Naive thymus-derived CD4-positive, alpha-beta T cell (primary cell): ENCODE measurements at regions of chr3 and their contacts with region 1.

Region 1: GRCh38 chr3:45387636-45388348 is 584 bp upstream of the LARS2 start:
- DNase-seq: no peak
- ATAC-seq: no peak
- H3K4me3 ChIP-seq: peak overlapping the region; percentile 95
- H3K4me3 Mint-ChIP-seq: peak overlapping the region; percentile 94 to 99 (median 97)
- H3K27ac ChIP-seq: peak overlapping the region; percentile 77
- H3K27ac Mint-ChIP-seq: peak overlapping the region; percentile 38 to 97 (median 91)
- H3K4me1 ChIP-seq: peaks cover 4 to 8% of the 10 kb centered on the region in 2 donors
- H3K4me1 Mint-ChIP-seq: peaks cover 6 to 27% (median 18%) of the 10 kb centered on the region in 7 donors
- H3K27me3 ChIP-seq: no peaks in the 10 kb centered on the region
- H3K27me3 Mint-ChIP-seq: peaks cover 0 to 35% (median 4%) of the 10 kb centered on the region in 5 donors

Region 2: GRCh38 chr3:45140141-45140784 is 247.5 kb before region 1 on chr3:
- CTCF ChIA-PET with region 1: no interaction called
- POLR2A ChIA-PET with region 1: no interaction called
- intact Hi-C with region 1: no loop called
- DNase-seq: no peak
- ATAC-seq: no peak
- H3K4me3 ChIP-seq: no peak overlapping the region
- H3K4me3 Mint-ChIP-seq: no peak overlapping the region
- H3K27ac ChIP-seq: no peak overlapping the region
- H3K27ac Mint-ChIP-seq: no peak overlapping the region
- H3K4me1 ChIP-seq: peaks cover 2 to 7% of the 10 kb centered on the region in 2 donors
- H3K4me1 Mint-ChIP-seq: peaks cover 4 to 19% (median 14%) of the 10 kb centered on the region in 7 donors
- H3K27me3 ChIP-seq: peaks cover 0 to 2% of the 10 kb centered on the region in 2 donors
- H3K27me3 Mint-ChIP-seq: peaks cover 25 to 61% (median 33%) of the 10 kb centered on the region in 5 donors

Region 3: DNA sequence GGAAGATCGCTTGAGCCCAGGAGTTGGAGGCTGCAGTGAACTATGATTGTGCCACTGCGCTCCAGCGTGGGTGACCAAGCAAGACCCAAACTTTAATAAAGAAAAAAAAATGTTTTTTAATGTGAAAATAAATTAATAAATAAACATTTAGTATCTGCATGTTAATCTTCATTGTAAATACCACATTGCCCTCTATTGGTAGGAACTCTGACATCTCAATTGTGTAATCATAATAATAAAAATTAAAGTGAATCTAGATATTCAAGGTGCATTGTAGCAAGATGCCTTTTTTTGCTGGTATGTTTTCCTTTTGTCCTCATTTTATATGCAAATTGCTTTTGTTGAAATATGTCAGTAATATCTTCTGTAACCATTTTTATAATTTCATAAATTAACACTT is 111.7 kb after region 1 on chr3:
- CTCF ChIA-PET with region 1: no interaction called
- POLR2A ChIA-PET with region 1: no interaction called
- intact Hi-C with region 1: loop called in 1 of 2 experiments (anchors 1 kb)
- DNase-seq: peak in 3 of 9 donors; percentile 19 to 33 (median 23)
- ATAC-seq: no peak
- H3K4me3 ChIP-seq: no peak overlapping the region
- H3K4me3 Mint-ChIP-seq: no peak overlapping the region
- H3K27ac ChIP-seq: no peak overlapping the region
- H3K27ac Mint-ChIP-seq: peak overlapping the region in 2 of 9 donors; percentile 47 to 76
- H3K4me1 ChIP-seq: peaks cover 0 to 26% of the 10 kb centered on the region in 2 donors
- H3K4me1 Mint-ChIP-seq: peaks cover 5 to 32% (median 25%) of the 10 kb centered on the region in 7 donors
- H3K27me3 ChIP-seq: no peaks in the 10 kb centered on the region
- H3K27me3 Mint-ChIP-seq: no peaks in the 10 kb centered on the region

Region 4: GRCh38 chr3:45593708-45594609 is 206.2 kb after region 1 on chr3:
- CTCF ChIA-PET with region 1: no interaction called
- POLR2A ChIA-PET with region 1: interaction called, 3 read pairs
- intact Hi-C with region 1: loop called (anchors 1 kb)
- DNase-seq: peak; percentile 46 to 83 (median 70)
- ATAC-seq: peak; percentile 83
- H3K4me3 ChIP-seq: peak overlapping the region; percentile 71
- H3K4me3 Mint-ChIP-seq: peak overlapping the region; percentile 84 to 99 (median 90)
- H3K27ac ChIP-seq: peak overlapping the region; percentile 72
- H3K27ac Mint-ChIP-seq: peak overlapping the region; percentile 85 to 96 (median 91)
- H3K4me1 ChIP-seq: peaks cover 44 to 58% of the 10 kb centered on the region in 2 donors
- H3K4me1 Mint-ChIP-seq: peaks cover 48 to 61% (median 55%) of the 10 kb centered on the region in 7 donors
- H3K27me3 ChIP-seq: no peaks in the 10 kb centered on the region
- H3K27me3 Mint-ChIP-seq: peaks cover 0 to 3% (median 0%) of the 10 kb centered on the region in 5 donors